ENCODE measurements at regions of chr5 and their contacts with region 1.

Region 1: DNA sequence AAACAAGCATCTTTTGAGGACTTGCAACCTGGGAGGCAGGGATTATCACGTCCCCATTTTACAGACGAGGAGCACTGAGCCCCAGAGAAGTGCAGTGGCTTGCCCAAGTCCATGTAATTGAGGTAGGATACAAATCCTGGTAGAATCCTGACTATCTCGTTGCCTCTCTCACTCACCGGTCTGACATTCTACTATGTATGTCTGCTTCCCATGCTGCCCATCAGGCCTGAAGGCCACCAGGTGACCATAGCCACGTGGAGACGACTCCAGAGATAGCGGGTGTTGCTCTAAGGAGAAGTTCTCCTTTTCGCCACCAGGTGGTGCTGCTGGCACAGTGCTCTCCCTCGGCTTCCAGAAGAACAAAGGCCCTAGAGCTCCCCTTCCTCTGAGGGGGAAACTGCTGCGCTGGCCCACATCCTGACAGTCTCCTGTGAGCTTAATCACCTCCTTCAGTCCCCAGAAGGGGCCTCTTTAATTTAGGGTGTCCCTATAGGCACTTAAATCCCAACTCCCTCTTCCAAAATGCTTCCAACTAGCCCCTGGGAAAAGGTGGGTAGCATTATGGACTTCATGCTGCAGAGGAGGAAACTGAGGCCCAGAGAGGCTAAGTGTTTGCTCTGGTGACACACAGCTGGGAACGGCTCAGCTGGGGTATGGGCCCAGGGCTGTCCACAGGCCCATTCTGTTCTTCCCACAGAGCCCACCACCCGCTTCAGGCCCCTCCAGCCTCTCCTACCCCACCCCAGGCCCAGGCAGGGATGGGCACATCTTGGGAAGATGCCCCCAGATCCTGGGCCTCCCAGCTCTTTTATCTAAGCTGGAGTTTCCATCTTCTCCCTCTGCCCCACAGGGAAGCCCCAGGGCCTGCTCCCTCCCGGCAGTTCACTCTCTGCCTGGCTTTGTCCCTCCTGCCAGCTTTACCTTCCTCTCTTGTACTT is 6.4 kb downstream of the SLC34A1 start:
- DNase-seq: peak; percentile 91

Region 2: GRCh38 chr5:177311723-177312648 is 78.6 kb before region 1 on chr5 and contains the start of gene MXD3:
- intact Hi-C with region 1: loop called in 1 of 2 experiments (anchors 10 kb)
- DNase-seq: peak; percentile 99
- total RNA-seq, gene MXD3: 5.4 to 6.1 TPM

Region 3: GRCh38 chr5:177403792-177404640 is 13.4 kb after region 1 on chr5:
- intact Hi-C with region 1: loop called in 1 of 2 experiments (anchors 1 kb)
- DNase-seq: peak; percentile 96

Region 4: GRCh38 chr5:177497292-177498033 is 106.8 kb after region 1 on chr5 and contains the start of gene PDLIM7:
- intact Hi-C with region 1: loop called (anchors 2 to 5 kb)
- DNase-seq: peak; percentile 98
- total RNA-seq, gene PDLIM7: 448 to 580 TPM

Measured in posterior vena cava (tissue), 2 donors.